ENCODE measurements at regions of chr2 and their contacts with region 1.

Region 1: DNA sequence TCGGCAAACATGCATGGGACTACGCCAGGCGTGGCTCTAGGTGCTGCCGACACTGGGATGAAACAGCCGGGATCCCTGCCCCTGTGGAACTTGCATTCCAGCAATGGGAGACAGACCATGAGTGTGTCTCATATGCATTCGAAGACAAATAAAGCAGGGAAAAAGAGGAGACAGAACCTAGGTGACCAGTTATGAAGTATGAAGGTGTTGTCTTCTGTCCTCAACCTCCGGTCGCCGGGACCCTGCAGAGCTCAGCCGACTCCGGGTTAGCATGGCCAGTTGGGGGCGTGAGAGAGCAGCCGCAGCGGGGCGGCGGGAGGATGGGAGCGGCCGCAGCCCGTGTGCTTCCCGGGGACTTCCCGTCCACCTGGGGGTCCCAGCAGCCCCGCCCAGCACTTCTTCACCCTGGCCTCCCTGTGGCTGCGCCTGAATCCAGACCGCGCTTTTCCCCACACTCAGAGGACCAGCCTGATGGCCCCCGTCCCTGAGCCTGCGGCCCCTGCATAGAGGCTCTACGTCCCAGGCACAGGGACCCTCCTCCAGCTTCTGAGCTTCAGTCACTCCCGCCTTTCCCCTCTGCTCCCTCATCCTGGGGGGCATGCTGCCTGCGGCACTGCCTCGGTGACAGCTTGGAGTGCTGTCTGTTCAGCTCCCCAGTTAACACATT is 11.4 kb downstream of the ID2 start:
- DNase-seq: no peak
- ATAC-seq: peak; percentile 96
- H3K4me3 ChIP-seq: peak overlapping the region in 1 of 2 experiments; percentile 31; a peak in 1 of 4 replicates
- H3K27ac ChIP-seq: no peak overlapping the region
- H3K4me1 ChIP-seq: peaks cover 0 to 12% of the 10 kb centered on the region in 2 experiments; a peak in 2 of 4 replicates
- H3K27me3 ChIP-seq: no peaks in the 10 kb centered on the region
- CTCF ChIP-seq: peak; percentile 56 to 86 (median 79); a peak in 5 of 6 replicates
- POLR2A ChIP-seq: no peak
- RAD21 ChIP-seq: peak; percentile 78

Region 2: GRCh38 chr2:8761529-8762164 is 68.4 kb after region 1 on chr2:
- CTCF ChIA-PET with region 1: interaction called, 6 read pairs
- POLR2A ChIA-PET with region 1: no interaction called
- RAD21 ChIA-PET with region 1: no interaction called
- intact Hi-C with region 1: loop called (anchors 2 kb)
- DNase-seq: peak; percentile 23
- ATAC-seq: no peak
- H3K4me3 ChIP-seq: no peak overlapping the region
- H3K27ac ChIP-seq: no peak overlapping the region
- H3K4me1 ChIP-seq: no peaks in the 10 kb centered on the region; a peak in 1 of 4 replicates
- H3K27me3 ChIP-seq: no peaks in the 10 kb centered on the region
- CTCF ChIP-seq: peak; percentile 32 to 62 (median 43); a peak in 4 of 6 replicates
- POLR2A ChIP-seq: no peak
- RAD21 ChIP-seq: peak; percentile 68